ENCODE measurements at regions of chr16 and their contacts with region 1.

Region 1: DNA sequence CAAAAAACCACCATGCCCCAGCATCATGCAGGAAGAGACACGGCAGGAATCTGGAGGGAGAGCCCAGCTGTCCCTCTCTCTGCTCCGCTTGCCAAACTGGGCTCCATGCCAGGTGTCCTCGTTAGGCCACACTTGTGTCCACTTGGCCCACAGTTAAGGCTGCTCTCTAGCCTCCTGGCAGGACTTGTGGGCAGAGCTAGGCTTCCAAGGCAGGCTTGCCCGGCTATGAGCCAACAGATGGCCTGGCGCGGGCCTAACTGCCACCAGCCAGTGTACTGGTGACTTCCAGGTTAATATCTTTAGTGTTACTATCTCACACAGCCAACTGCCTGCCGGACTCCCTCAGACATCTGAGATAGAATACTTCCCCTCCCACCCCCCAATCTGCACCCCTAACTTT is 10.6 kb downstream of the ATP6V0D1 start:
- DNase-seq: peak; percentile 61
- H3K4me3 ChIP-seq: no peak overlapping the region
- H3K27ac ChIP-seq: peak overlapping the region in 1 of 2 experiments; percentile 53; a peak in 2 of 4 replicates
- H3K4me1 ChIP-seq: peaks cover 3 to 13% of the 10 kb centered on the region in 2 experiments; a peak in 1 of 4 replicates
- H3K27me3 ChIP-seq: no peaks in the 10 kb centered on the region
- CTCF ChIP-seq: no peak
- EP300 ChIP-seq: no peak
- RAD21 ChIP-seq: no peak

Region 2: DNA sequence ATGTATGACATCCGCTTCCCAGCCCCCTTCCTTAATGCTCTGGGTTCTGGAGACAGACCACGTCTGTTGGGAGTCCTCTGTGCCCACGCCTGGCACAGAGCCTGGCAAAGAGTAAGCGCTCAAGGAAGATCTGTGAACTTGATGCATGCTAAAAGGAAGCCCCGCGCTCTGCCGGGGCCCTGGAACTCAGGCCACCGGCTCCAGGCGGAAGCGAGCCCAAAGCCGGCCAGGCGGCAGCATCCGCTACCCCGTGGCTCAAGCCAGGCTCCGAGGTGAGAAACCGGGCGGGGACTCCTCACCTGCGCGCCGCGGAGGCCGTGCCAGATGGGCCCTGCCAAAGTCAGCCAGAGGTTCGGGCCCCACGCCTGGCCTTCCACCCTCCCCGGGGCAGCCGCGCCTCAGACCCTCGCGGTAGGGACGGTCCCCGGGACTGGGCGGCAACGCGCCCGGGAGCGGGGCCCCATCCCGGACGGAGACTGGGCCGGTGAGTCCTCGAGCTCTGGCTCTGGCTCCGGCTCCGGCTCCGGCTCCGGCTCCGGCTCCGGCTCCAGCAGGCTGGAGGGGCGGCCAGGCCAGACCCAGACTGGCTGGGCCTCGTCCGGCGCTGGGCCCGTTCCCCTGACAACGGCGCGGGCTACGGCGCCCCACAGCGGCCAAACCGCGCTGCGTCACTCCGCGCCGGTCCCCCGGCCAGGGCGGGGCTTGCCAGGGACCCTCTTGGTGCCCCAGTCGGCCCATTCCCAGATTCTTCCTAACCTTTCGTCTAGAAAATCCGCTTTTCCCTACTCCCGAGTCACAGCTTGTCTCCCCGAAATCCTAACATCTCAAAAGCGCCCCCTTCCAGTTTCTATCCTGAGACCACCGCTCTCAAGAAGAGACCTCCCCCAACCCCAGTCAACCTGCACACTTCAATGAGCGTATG is 54.2 kb before region 1 on chr16 and contains the start of gene ZDHHC1:
- CTCF ChIA-PET with region 1: interaction called, 10 read pairs
- POLR2A ChIA-PET with region 1: no interaction called
- DNase-seq: peak; percentile 96
- H3K4me3 ChIP-seq: peak within 1 kb of the TSS; percentile 64 to 66
- H3K27ac ChIP-seq: peak within 1 kb of the TSS; percentile 53 to 79
- H3K4me1 ChIP-seq: no peaks in the 10 kb centered on the region; a peak in 1 of 4 replicates
- H3K27me3 ChIP-seq: no peaks in the 10 kb centered on the region
- CTCF ChIP-seq: peak; percentile 56
- EP300 ChIP-seq: no peak
- RAD21 ChIP-seq: peak; percentile 70
- polyA plus RNA-seq, gene ZDHHC1: 14.2 and 15.8 TPM in 2 replicates

Region 3: GRCh38 chr16:67456391-67457081 is 13.8 kb before region 1 on chr16:
- CTCF ChIA-PET with region 1: interaction called, 18 read pairs
- POLR2A ChIA-PET with region 1: no interaction called
- DNase-seq: peak; percentile 51
- H3K4me3 ChIP-seq: no peak overlapping the region
- H3K27ac ChIP-seq: peak overlapping the region in 1 of 2 experiments; percentile 36; a peak in 1 of 4 replicates
- H3K4me1 ChIP-seq: peaks cover 14 to 49% of the 10 kb centered on the region in 2 experiments; a peak in 3 of 4 replicates
- H3K27me3 ChIP-seq: no peaks in the 10 kb centered on the region
- CTCF ChIP-seq: peak; percentile 54
- EP300 ChIP-seq: no peak
- RAD21 ChIP-seq: no peak

Region 4: GRCh38 chr16:67480833-67481560 is 10.6 kb after region 1 on chr16 and contains the start of gene ATP6V0D1:
- CTCF ChIA-PET with region 1: interaction called, 29 read pairs
- POLR2A ChIA-PET with region 1: interaction called, 3 read pairs
- DNase-seq: peak; percentile 98
- H3K4me3 ChIP-seq: peak within 1 kb of the TSS; percentile 80 to 100
- H3K27ac ChIP-seq: peak within 1 kb of the TSS; percentile 89 to 91
- H3K4me1 ChIP-seq: peaks cover 6 to 19% of the 10 kb centered on the region in 2 experiments; a peak in 1 of 4 replicates
- H3K27me3 ChIP-seq: no peaks in the 10 kb centered on the region
- CTCF ChIP-seq: peak; percentile 79
- EP300 ChIP-seq: no peak
- RAD21 ChIP-seq: peak; percentile 68
- polyA plus RNA-seq, gene ATP6V0D1: 111 and 135 TPM in 2 replicates

Measured in SK-N-SH (cell line).